Activated naive CD4-positive, alpha-beta T cell treated with anti-CD3 and anti-CD28 coated beads for 36 hours (primary cell): ENCODE measurements at regions of chr20 and their contacts with region 1.

Region 1: GRCh38 chr20:235891-236290 is 8.8 kb downstream of the DEFB129 start:
- DNase-seq: no peak
- H3K4me3 Mint-ChIP-seq: no peak overlapping the region
- H3K27ac Mint-ChIP-seq: no peak overlapping the region
- H3K4me1 Mint-ChIP-seq: peaks cover 28% of the 10 kb centered on the region
- H3K27me3 Mint-ChIP-seq: no peaks in the 10 kb centered on the region

Region 2: GRCh38 chr20:258963-259362 is 23.1 kb after region 1 on chr20:
- CTCF ChIA-PET with region 1: no interaction called
- intact Hi-C with region 1: loop called (anchors 2 kb)
- DNase-seq: peak; percentile 42
- H3K4me3 Mint-ChIP-seq: no peak overlapping the region
- H3K27ac Mint-ChIP-seq: no peak overlapping the region
- H3K4me1 Mint-ChIP-seq: peaks cover 13% of the 10 kb centered on the region
- H3K27me3 Mint-ChIP-seq: no peaks in the 10 kb centered on the region